Caki2 (cell line): ENCODE measurements at regions of chr7 and their contacts with region 1.

Region 1: GRCh38 chr7:39732837-39733804 is 109.7 kb downstream of the RALA start:
- DNase-seq: peak; percentile 95

Region 2: GRCh38 chr7:38889861-38890432 is 843.2 kb before region 1 on chr7:
- in situ Hi-C with region 1: no loop called
- DNase-seq: no peak

Region 3: GRCh38 chr7:39488467-39489393 is 244.4 kb before region 1 on chr7:
- in situ Hi-C with region 1: no loop called
- DNase-seq: no peak

Region 4: DNA sequence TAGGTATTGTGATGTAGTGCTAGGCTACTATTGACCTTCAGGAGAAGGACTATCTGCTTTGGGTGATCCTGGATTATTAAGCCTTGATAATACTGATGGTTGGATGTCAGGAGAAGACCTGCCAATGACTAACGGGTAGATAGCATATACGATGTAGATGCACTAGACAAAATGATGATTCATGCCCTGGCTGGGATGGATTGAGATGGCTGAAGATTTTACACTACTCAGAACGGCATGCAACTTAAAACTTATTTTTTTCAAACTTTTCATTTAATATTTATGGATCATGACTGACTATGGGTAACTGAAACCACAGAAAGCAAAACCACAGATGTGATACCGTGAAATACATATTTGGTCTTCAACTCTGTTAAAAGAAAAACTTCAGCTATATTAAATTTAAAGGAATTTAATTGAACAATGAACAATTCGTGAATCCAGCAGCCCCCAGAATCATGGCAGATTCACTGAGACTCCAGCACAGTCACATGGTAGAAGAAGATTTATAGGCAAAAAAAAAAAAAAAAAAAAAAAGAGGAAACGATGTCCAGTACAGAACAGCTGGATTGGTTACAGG is 92.4 kb after region 1 on chr7:
- in situ Hi-C with region 1: loop called (anchors 10 kb)
- DNase-seq: no peak